Right lobe of liver (tissue), 6 donors: ENCODE measurements at regions of chr3 and their contacts with region 1.

Region 1: GRCh38 chr3:45210308-45211041 is 15.6 kb downstream of the TMEM158 start:
- DNase-seq: peak; percentile 85 to 89 (median 87)
- ATAC-seq: peak; percentile 98 to 100 (median 99)
- H3K4me3 ChIP-seq: no peak overlapping the region
- H3K27ac ChIP-seq: no peak overlapping the region
- H3K4me1 ChIP-seq: no peaks in the 10 kb centered on the region
- H3K27me3 ChIP-seq: no peaks in the 10 kb centered on the region
- CTCF ChIP-seq: peak; percentile 75 to 85 (median 77)
- POLR2A ChIP-seq: no peak

Region 2: GRCh38 chr3:45037734-45038455 is 172.6 kb before region 1 on chr3:
- intact Hi-C with region 1: loop called (anchors 5 kb)
- DNase-seq: peak; percentile 88 to 92 (median 89)
- ATAC-seq: peak; percentile 95 to 97 (median 96)
- H3K4me3 ChIP-seq: no peak overlapping the region
- H3K27ac ChIP-seq: no peak overlapping the region
- H3K4me1 ChIP-seq: peaks cover 0 to 6% (median 0%) of the 10 kb centered on the region in 4 donors
- H3K27me3 ChIP-seq: no peaks in the 10 kb centered on the region
- CTCF ChIP-seq: peak; percentile 93 to 98 (median 96)
- POLR2A ChIP-seq: no peak

Region 3: GRCh38 chr3:45043728-45044299 is 166.7 kb before region 1 on chr3:
- intact Hi-C with region 1: loop called (anchors 5 kb)
- DNase-seq: no peak
- ATAC-seq: peak in 2 of 4 donors; percentile 33 to 42
- H3K4me3 ChIP-seq: no peak overlapping the region
- H3K27ac ChIP-seq: no peak overlapping the region
- H3K4me1 ChIP-seq: no peaks in the 10 kb centered on the region
- H3K27me3 ChIP-seq: no peaks in the 10 kb centered on the region
- CTCF ChIP-seq: no peak
- POLR2A ChIP-seq: no peak